Right ventricle myocardium inferior (tissue), 1 donor: ENCODE measurements at regions of chr7 and their contacts with region 1.

Region 1: GRCh38 chr7:122803323-122803722 is 82.9 kb downstream of the CADPS2 start:
- DNase-seq: no peak
- ATAC-seq: no peak

Region 2: GRCh38 chr7:122843888-122844589 is 40.7 kb after region 1 on chr7:
- intact Hi-C with region 1: no loop called
- DNase-seq: no peak
- ATAC-seq: no peak

Region 3: GRCh38 chr7:122886357-122887081 is 83.2 kb after region 1 on chr7 and contains the start of gene CADPS2:
- intact Hi-C with region 1: loop called (anchors 2 kb)
- DNase-seq: peak; percentile 89
- ATAC-seq: peak; percentile 95
- total RNA-seq, gene CADPS2: 20.8 TPM